ENCODE measurements at regions of chr13 and their contacts with region 1.

Region 1: GRCh38 chr13:43023289-43023951 is at the start of gene DNAJC15:
- DNase-seq: peak; percentile 56 to 74
- H3K4me3 ChIP-seq: peak within 1 kb of the TSS; percentile 65 to 82 (median 74)
- H3K27ac ChIP-seq: peak within 1 kb of the TSS; percentile 29; the same call in 1 of the 2 replicates
- H3K4me1 ChIP-seq: no peaks in the 10 kb centered on the region
- H3K27me3 ChIP-seq: peaks cover 0 to 5% (median 2%) of the 10 kb centered on the region in 4 experiments; a peak in 1 of 7 replicates
- CTCF ChIP-seq: peak in 1 of 3 experiments; percentile 12; a peak in 1 of 4 replicates
- EP300 ChIP-seq: no peak
- POLR2A ChIP-seq: peak; percentile 76 to 81
- RAD21 ChIP-seq: peak in 1 of 2 experiments; percentile 0; a peak in 2 of 4 replicates
- total RNA-seq, gene DNAJC15: 5.8 and 6.5 TPM in 2 replicates

Region 2: DNA sequence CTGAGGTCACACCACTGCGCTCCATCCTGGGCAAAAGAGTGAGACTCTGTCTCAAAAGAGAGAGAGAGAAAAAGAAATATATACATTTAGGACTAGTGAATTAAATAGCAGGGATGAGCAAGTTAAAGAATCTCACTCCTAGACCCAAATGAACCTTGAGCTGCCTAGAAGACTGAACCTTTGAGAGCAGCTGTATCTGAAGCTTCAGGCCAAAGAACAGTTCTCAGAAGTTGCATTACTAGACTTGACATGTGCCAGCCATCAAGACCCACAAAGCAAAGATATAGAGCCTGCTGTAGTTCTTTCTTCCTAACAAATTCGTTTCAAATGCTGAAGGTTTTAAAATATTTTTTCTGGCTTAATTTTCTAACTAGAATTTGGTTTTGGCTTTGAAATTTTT is 16.5 kb after region 1 on chr13:
- CTCF ChIA-PET with region 1: interaction called, 3 read pairs
- POLR2A ChIA-PET with region 1: interaction called, 10 read pairs
- DNase-seq: no peak
- H3K4me3 ChIP-seq: no peak overlapping the region
- H3K27ac ChIP-seq: no peak overlapping the region
- H3K4me1 ChIP-seq: peaks cover 2 to 11% (median 5%) of the 10 kb centered on the region in 4 experiments; a peak in 5 of 7 replicates
- H3K27me3 ChIP-seq: no peaks in the 10 kb centered on the region
- CTCF ChIP-seq: no peak
- EP300 ChIP-seq: no peak
- POLR2A ChIP-seq: no peak
- RAD21 ChIP-seq: no peak